ENCODE measurements at regions of chr9 and their contacts with region 1.

Region 1: DNA sequence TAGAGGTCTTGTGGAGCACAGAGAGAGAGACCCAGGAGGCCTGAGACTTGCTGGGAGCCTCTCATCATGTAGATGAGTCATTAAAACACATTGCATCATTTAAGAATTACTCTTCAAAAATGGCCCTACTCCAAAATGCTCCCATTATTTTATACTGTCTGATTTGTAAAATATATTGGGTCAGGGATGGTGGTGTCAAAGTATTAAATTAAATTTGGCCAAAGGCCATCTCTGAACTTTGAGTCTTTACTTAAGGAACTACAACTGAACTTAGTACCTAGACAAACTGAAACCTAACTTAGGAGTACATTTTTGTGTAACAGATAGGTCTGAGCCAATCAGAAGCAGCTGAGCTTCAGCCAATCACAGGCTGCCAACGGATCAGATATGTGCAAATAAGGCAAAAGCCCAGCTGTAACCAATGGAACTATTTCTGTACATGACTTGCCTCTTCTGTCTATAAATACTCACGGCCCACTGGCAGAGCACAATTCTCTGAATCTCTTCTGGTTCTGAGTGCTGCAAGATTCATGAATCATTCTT is 657.2 kb downstream of the TLE1 start:
- DNase-seq: no peak
- H3K4me3 ChIP-seq: no peak overlapping the region
- H3K27ac ChIP-seq: no peak overlapping the region
- H3K4me1 ChIP-seq: peaks cover 13% of the 10 kb centered on the region
- H3K27me3 ChIP-seq: no peaks in the 10 kb centered on the region
- CTCF ChIP-seq: no peak
- POLR2A ChIP-seq: no peak

Region 2: GRCh38 chr9:79312686-79313421 is 1719.2 kb before region 1 on chr9:
- intact Hi-C with region 1: no loop called
- DNase-seq: no peak
- H3K4me3 ChIP-seq: no peak overlapping the region
- H3K27ac ChIP-seq: no peak overlapping the region
- H3K4me1 ChIP-seq: no peaks in the 10 kb centered on the region
- H3K27me3 ChIP-seq: no peaks in the 10 kb centered on the region
- CTCF ChIP-seq: no peak
- POLR2A ChIP-seq: no peak

Region 3: DNA sequence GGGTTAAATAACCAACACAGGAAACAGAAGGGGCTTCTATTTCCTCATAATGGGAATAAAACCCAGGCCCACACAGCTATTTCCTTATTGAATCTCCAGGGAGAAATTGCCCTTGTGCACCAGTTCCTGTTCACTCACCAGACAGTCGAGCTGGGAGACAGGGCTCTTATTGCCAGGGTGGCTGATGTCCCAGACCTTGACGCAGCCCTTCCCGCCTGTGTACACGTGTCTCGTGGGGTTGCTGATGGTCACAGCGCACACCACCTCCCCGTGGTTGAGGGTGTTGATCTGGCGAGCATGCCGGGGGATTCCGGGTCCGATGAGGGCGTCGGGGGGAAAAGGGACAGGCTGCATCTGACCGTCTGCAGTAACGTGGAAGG is 560.8 kb after region 1 on chr9:
- intact Hi-C with region 1: loop called (anchors 5 kb)
- DNase-seq: no peak
- H3K4me3 ChIP-seq: no peak overlapping the region
- H3K27ac ChIP-seq: no peak overlapping the region
- H3K4me1 ChIP-seq: peaks cover under 1% of the 10 kb centered on the region
- H3K27me3 ChIP-seq: no peaks in the 10 kb centered on the region
- CTCF ChIP-seq: no peak
- POLR2A ChIP-seq: no peak